A549 (cell line): ENCODE measurements at regions of chr7 and their contacts with region 1.

Region 1: GRCh38 chr7:6323967-6324701 is 51.7 kb upstream of the CYTH3 start:
- DNase-seq: no peak
- ATAC-seq: no peak
- H3K4me3 ChIP-seq: no peak overlapping the region
- H3K27ac ChIP-seq: no peak overlapping the region
- H3K4me1 ChIP-seq: peaks cover 5% of the 10 kb centered on the region; the same call in 2 of the 3 replicates
- CTCF ChIP-seq: no peak
- EP300 ChIP-seq: no peak
- POLR2A ChIP-seq: no peak
- RAD21 ChIP-seq: no peak

Region 2: GRCh38 chr7:4549681-4550080 is 1774.5 kb before region 1 on chr7:
- CTCF ChIA-PET with region 1: no interaction called
- POLR2A ChIA-PET with region 1: no interaction called
- DNase-seq: no peak
- ATAC-seq: no peak
- H3K4me3 ChIP-seq: no peak overlapping the region
- H3K27ac ChIP-seq: no peak overlapping the region
- H3K4me1 ChIP-seq: no peaks in the 10 kb centered on the region
- CTCF ChIP-seq: no peak
- EP300 ChIP-seq: no peak
- POLR2A ChIP-seq: no peak
- RAD21 ChIP-seq: no peak

Region 3: GRCh38 chr7:6111041-6111440 is 213.1 kb before region 1 on chr7:
- CTCF ChIA-PET with region 1: interaction called, 11 read pairs
- POLR2A ChIA-PET with region 1: no interaction called
- DNase-seq: no peak
- ATAC-seq: no peak
- H3K4me3 ChIP-seq: no peak overlapping the region
- H3K27ac ChIP-seq: no peak overlapping the region
- H3K4me1 ChIP-seq: peaks cover 10% of the 10 kb centered on the region
- CTCF ChIP-seq: no peak
- EP300 ChIP-seq: no peak
- POLR2A ChIP-seq: no peak
- RAD21 ChIP-seq: no peak

Region 4: GRCh38 chr7:6160191-6160623 is 163.9 kb before region 1 on chr7:
- CTCF ChIA-PET with region 1: interaction called, 102 read pairs
- POLR2A ChIA-PET with region 1: no interaction called
- DNase-seq: peak; percentile 48 to 76
- ATAC-seq: peak; percentile 72 to 79
- H3K4me3 ChIP-seq: no peak overlapping the region
- H3K27ac ChIP-seq: peak overlapping the region in 1 of 2 experiments; percentile 25; a peak in 1 of 6 replicates
- H3K4me1 ChIP-seq: no peaks in the 10 kb centered on the region
- CTCF ChIP-seq: peak; percentile 79
- EP300 ChIP-seq: no peak
- POLR2A ChIP-seq: no peak
- RAD21 ChIP-seq: peak; percentile 70 to 77

Region 5: DNA sequence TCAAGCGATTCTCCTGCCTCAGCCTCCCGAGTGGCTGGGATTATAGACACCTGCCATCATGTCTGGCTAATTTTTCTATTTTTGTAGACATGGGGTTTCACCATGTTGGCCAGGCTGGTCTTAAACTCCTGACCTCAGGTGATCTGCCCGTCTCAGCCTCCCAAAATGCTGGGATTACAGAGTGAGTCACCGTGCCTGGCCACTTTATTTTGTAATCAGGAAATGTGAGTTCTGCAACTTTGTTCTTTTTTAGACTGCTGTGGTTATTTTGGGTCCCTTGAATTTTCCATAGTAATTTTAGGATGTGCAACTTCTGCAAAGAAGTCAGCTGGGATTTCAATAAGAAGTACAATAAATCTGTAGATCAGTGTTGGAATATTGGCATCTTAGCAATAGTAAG is 148.5 kb before region 1 on chr7:
- CTCF ChIA-PET with region 1: interaction called, 12 read pairs
- POLR2A ChIA-PET with region 1: no interaction called
- DNase-seq: no peak
- ATAC-seq: no peak
- H3K4me3 ChIP-seq: no peak overlapping the region
- H3K27ac ChIP-seq: no peak overlapping the region
- H3K4me1 ChIP-seq: peaks cover 9% of the 10 kb centered on the region
- CTCF ChIP-seq: no peak
- EP300 ChIP-seq: no peak
- POLR2A ChIP-seq: no peak
- RAD21 ChIP-seq: no peak

Region 6: GRCh38 chr7:6256677-6257535 is 67.2 kb before region 1 on chr7:
- CTCF ChIA-PET with region 1: interaction called, 11 read pairs
- POLR2A ChIA-PET with region 1: no interaction called
- DNase-seq: no peak
- ATAC-seq: peak in 1 of 2 experiments; percentile 40; a peak in 3 of 6 replicates
- H3K4me3 ChIP-seq: no peak overlapping the region
- H3K27ac ChIP-seq: 0 out of 6 replicates have a peak overlapping the region, but pooled peaks of 1 of the 2 experiments have one; percentile 11
- H3K4me1 ChIP-seq: peaks cover 61% of the 10 kb centered on the region
- CTCF ChIP-seq: no peak
- EP300 ChIP-seq: no peak
- POLR2A ChIP-seq: no peak
- RAD21 ChIP-seq: no peak

Region 7: DNA sequence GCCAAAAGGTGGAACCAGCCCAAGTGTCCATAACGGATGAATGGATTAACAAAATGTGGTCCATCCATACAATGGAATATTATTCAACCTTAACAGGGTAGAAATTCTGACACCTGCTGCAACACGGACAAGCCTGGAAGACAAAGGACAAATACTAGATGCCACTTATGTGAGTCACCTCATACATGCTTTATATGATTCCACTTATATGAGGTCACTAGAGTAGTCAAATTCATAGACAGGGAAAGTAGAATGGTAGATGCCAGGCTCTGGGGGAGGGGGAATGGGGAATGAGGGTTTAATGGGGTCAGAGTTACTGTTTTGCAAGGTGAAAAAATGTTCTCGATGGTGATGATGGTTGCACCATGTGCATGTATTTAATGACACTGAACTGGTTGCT is 17.7 kb before region 1 on chr7:
- CTCF ChIA-PET with region 1: interaction called, 18 read pairs
- POLR2A ChIA-PET with region 1: no interaction called
- DNase-seq: peak; percentile 72 to 86
- ATAC-seq: peak; percentile 90 to 99
- H3K4me3 ChIP-seq: no peak overlapping the region
- H3K27ac ChIP-seq: peak overlapping the region; percentile 69 to 86
- H3K4me1 ChIP-seq: peaks cover 53% of the 10 kb centered on the region
- CTCF ChIP-seq: no peak
- EP300 ChIP-seq: peak; percentile 65 to 73; a peak in 2 of 5 replicates
- POLR2A ChIP-seq: no peak
- RAD21 ChIP-seq: peak in 1 of 2 experiments; percentile 13; a peak in 3 of 5 replicates